ENCODE measurements at regions of chr9 and their contacts with region 1.

Region 1: GRCh38 chr9:133658442-133659431 is 22.6 kb downstream of the DBH start:
- H3K4me3 ChIP-seq: peak overlapping the region; percentile 7; the same call in 1 of the 2 replicates
- H3K27ac ChIP-seq: no peak overlapping the region
- H3K4me1 ChIP-seq: peaks cover 3% of the 10 kb centered on the region
- CTCF ChIP-seq: no peak

Region 2: GRCh38 chr9:133673258-133673655 is 14.5 kb after region 1 on chr9:
- CTCF ChIA-PET with region 1: interaction called, 10 read pairs
- POLR2A ChIA-PET with region 1: no interaction called
- H3K4me3 ChIP-seq: no peak overlapping the region
- H3K27ac ChIP-seq: no peak overlapping the region
- H3K4me1 ChIP-seq: no peaks in the 10 kb centered on the region
- CTCF ChIP-seq: no peak

Measured in HEK293 (cell line).